ENCODE measurements at regions of chr18 and their contacts with region 1.

Region 1: GRCh38 chr18:58080451-58080850 is 36.4 kb downstream of the NEDD4L start:
- DNase-seq: peak; percentile 18
- H3K4me3 Mint-ChIP-seq: no peak overlapping the region
- H3K27ac Mint-ChIP-seq: peak overlapping the region; percentile 57
- H3K4me1 Mint-ChIP-seq: peaks cover 30% of the 10 kb centered on the region
- H3K27me3 Mint-ChIP-seq: no peaks in the 10 kb centered on the region
- CTCF ChIP-seq: no peak

Region 2: GRCh38 chr18:58051765-58052460 is 28.5 kb before region 1 on chr18:
- CTCF ChIA-PET with region 1: interaction called, 8 read pairs
- POLR2A ChIA-PET with region 1: interaction called, 54 read pairs
- intact Hi-C with region 1: no loop called
- DNase-seq: peak; percentile 42
- H3K4me3 Mint-ChIP-seq: no peak overlapping the region
- H3K27ac Mint-ChIP-seq: peak overlapping the region; percentile 16
- H3K4me1 Mint-ChIP-seq: peaks cover 23% of the 10 kb centered on the region
- H3K27me3 Mint-ChIP-seq: no peaks in the 10 kb centered on the region
- CTCF ChIP-seq: peak; percentile 35

Region 3: GRCh38 chr18:58064406-58064998 is 15.9 kb before region 1 on chr18:
- CTCF ChIA-PET with region 1: interaction called, 9 read pairs
- POLR2A ChIA-PET with region 1: interaction called, 11 read pairs
- intact Hi-C with region 1: no loop called
- DNase-seq: no peak
- H3K4me3 Mint-ChIP-seq: no peak overlapping the region
- H3K27ac Mint-ChIP-seq: no peak overlapping the region
- H3K4me1 Mint-ChIP-seq: no peaks in the 10 kb centered on the region
- H3K27me3 Mint-ChIP-seq: no peaks in the 10 kb centered on the region
- CTCF ChIP-seq: no peak

Region 4: DNA sequence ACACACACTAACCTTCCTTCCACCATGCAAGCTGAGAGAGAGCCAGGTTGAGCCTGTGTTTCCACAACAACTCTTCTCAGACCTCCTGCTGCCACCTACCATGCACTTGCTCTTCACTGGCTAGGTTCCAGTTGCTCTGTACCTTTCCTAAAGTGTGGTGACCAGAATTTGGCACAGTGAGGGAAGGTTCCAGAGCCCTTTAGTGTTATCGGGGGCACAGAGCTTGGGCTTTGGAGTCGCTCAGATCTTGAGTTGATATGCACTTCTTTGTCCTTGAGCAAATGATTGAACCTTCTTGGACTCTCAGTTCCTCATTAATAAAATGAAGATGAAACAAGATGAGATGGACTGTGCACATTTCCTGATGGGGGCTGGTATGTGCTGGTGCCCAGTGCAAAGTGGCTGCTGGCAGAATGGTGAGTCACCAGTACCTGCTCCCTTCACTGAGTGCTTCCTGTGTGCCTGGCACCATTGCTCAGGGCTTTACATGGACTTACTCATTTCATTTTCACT is 10.7 kb after region 1 on chr18:
- CTCF ChIA-PET with region 1: interaction called, 8 read pairs
- POLR2A ChIA-PET with region 1: interaction called, 44 read pairs
- intact Hi-C with region 1: no loop called
- DNase-seq: peak; percentile 82
- H3K4me3 Mint-ChIP-seq: no peak overlapping the region
- H3K27ac Mint-ChIP-seq: peak overlapping the region; percentile 17
- H3K4me1 Mint-ChIP-seq: peaks cover 30% of the 10 kb centered on the region
- H3K27me3 Mint-ChIP-seq: no peaks in the 10 kb centered on the region
- CTCF ChIP-seq: no peak

Region 5: DNA sequence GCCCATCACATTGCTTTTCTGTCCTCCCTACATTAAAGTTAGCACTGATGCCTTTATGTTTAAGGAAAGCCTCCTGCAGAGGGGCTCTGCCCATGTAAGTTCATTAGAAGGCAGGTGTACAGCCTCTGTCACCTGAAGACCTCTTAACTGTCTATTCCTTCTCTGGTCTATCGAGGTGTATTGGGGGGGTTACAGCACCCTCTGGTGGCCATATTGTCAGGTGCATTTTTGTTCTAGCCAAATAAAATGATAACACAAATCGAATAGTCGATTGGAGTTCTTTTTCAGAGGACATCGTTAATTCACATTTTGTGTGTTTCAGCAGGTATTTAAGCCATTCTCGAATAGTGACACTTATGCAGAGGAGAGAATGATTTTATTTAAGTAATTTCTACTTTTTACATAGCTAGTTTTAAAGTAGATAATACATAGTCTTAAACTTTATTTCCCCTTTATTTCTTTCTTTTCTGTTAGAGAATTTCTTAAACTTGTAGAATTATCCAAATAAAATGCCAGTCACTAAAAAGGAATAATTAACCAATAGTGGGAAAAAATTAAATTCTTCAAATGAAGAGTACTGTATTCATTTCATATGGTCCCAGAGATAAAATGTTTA is 100.4 kb after region 1 on chr18:
- CTCF ChIA-PET with region 1: no interaction called
- POLR2A ChIA-PET with region 1: no interaction called
- intact Hi-C with region 1: no loop called
- DNase-seq: peak; percentile 69
- H3K4me3 Mint-ChIP-seq: no peak overlapping the region
- H3K27ac Mint-ChIP-seq: no peak overlapping the region
- H3K4me1 Mint-ChIP-seq: peaks cover 15% of the 10 kb centered on the region
- H3K27me3 Mint-ChIP-seq: no peaks in the 10 kb centered on the region
- CTCF ChIP-seq: peak; percentile 79

Region 6: GRCh38 chr18:58416704-58417683 is 336.5 kb after region 1 on chr18:
- CTCF ChIA-PET with region 1: no interaction called
- POLR2A ChIA-PET with region 1: no interaction called
- intact Hi-C with region 1: no loop called
- DNase-seq: peak; percentile 41
- H3K4me3 Mint-ChIP-seq: peak overlapping the region; percentile 43
- H3K27ac Mint-ChIP-seq: peak overlapping the region; percentile 69
- H3K4me1 Mint-ChIP-seq: peaks cover 39% of the 10 kb centered on the region
- H3K27me3 Mint-ChIP-seq: no peaks in the 10 kb centered on the region
- CTCF ChIP-seq: no peak